Activated naive CD4-positive, alpha-beta T cell treated with anti-CD3 and anti-CD28 coated beads, Interleukin-2, amount 10 ng/mL, durations not matched to agents 7 days and 5 days (primary cell): ENCODE measurements at regions of chr17 and their contacts with region 1.

Region 1: DNA sequence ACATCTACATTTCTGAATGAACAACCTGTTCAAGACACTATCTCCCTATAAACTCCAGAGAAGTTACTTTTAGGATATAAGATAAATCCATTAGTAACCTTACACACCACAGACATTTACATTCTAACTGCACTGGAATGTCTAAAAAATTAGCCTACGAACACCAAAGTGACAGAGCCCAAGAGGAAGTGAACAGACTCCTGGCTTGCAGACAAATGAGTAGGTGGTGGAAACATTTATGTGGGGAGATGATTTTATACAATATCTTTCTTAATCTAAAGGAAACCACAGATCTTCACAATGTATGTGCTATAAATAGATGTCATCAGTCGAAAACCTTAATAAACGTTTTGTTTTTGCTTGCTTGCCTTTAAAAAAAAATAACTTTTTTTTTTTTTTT is 18.8 kb downstream of the ZNF652 start:
- DNase-seq: no peak
- H3K4me3 Mint-ChIP-seq: peak overlapping the region; percentile 37
- H3K27ac Mint-ChIP-seq: peak overlapping the region; percentile 85
- H3K4me1 Mint-ChIP-seq: peaks cover 68% of the 10 kb centered on the region
- H3K27me3 Mint-ChIP-seq: no peaks in the 10 kb centered on the region

Region 2: DNA sequence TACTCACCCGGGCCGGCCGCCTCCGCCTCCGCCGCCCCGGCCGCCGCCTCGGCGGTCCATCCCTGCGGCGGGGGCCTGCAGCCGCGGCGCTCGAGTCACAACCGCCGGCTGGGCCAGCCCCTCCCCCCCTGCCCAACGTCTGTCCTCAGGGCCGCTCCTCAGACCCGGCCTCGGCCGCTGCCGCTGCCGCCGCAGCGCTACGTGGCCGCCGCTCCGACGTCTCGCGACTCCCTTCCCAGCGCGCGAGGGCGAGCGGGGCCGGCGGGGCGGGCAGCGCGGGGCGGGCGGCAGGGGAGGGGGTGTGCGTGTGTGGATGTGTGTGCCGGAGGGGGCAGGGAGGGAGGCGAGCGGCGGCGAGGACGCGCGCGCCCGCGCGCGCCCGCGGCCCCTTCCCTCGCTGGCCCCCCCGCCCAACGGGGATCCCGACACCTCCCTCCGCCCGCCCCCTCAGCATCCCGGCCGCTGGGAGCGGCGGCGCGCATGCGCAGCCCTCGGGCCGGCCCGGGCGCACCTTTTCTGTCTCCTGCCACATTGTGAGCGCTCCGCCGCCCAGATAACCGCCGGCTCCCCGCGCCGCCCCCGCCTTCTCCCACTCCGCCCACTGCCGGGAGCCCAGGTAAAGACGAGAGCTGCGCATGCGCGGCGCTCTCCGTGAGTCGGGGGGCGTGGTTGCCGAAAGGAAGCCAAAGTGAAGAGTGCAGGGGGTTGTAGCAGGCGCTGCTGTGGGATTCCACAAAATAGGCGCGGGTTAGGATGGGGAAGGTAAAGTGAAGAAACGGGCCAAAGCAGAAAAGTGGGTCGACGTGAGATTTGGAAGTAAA is 18.8 kb after region 1 on chr17 and contains the start of gene ZNF652:
- CTCF ChIA-PET with region 1: interaction called, 22 read pairs
- DNase-seq: peak; percentile 97
- H3K4me3 Mint-ChIP-seq: peak within 1 kb of the TSS; percentile 94
- H3K27ac Mint-ChIP-seq: peak within 1 kb of the TSS; percentile 98
- H3K4me1 Mint-ChIP-seq: peaks cover 66% of the 10 kb centered on the region
- H3K27me3 Mint-ChIP-seq: peaks cover 3% of the 10 kb centered on the region

Region 3: DNA sequence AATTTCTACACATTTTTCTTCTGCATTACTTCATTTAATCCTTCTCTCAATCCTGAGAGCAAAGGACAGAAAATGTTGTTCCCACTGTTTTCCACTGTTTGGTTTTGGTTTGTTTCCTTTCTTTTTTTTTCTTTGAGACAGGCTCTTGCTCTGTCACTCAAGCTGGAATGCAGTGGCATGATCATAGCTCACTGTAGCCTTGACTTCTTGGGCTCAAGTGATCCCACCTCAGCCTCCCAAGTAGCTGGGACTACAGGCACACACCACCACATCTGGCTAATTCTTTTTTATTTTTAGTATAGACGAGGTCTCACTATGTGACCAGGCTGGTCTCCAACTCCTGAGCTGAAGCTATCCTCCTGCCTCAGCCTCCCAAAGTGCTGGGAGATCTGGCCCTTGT is 25.8 kb after region 1 on chr17:
- CTCF ChIA-PET with region 1: interaction called, 12 read pairs
- DNase-seq: no peak
- H3K4me3 Mint-ChIP-seq: no peak overlapping the region
- H3K27ac Mint-ChIP-seq: no peak overlapping the region
- H3K4me1 Mint-ChIP-seq: peaks cover 32% of the 10 kb centered on the region
- H3K27me3 Mint-ChIP-seq: peaks cover 13% of the 10 kb centered on the region

Region 4: DNA sequence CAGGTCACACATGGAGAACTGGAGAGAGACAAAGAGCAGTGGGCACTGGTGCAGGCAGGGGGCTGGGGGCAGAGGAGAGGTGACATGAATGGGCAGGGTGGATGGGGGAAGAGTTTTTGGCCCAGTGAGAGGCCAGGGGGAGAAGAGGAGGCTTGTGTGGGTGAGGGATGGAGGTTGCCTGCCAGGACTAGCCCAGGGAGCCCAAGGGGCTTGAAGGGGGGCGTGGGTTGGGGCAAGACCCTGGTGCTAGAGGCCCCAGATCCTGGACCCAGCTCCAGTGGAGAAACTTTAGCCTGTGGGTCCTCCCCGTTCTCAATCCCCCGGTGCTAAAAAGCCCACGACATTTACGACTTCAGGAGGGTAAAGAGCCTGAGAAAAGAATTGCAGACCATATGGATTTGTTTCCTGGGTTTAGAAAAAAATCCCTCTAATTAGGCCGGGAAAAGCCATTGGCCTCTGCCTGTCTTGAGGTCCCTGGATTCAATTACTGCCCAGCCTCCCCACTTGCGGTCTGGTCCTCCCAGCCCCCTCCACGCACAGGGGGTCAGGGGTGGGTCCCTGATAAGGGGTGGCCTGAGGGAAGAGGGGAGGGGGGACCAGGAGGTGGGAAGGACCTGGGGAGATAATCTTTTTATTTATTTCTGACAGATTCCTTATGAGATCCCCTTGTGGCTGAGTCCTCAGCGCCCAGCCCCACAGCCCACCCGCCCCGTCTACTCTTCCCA is 184.8 kb after region 1 on chr17:
- CTCF ChIA-PET with region 1: no interaction called
- DNase-seq: no peak
- H3K4me3 Mint-ChIP-seq: no peak overlapping the region
- H3K27ac Mint-ChIP-seq: no peak overlapping the region
- H3K4me1 Mint-ChIP-seq: peaks cover 6% of the 10 kb centered on the region
- H3K27me3 Mint-ChIP-seq: peaks cover 23% of the 10 kb centered on the region